GM12878 (cell line): ENCODE measurements at regions of chr10 and their contacts with region 1.

Region 1: GRCh38 chr10:104291439-104291951 is 22.5 kb downstream of the GSTO2 start:
- DNase-seq: peak; percentile 40
- ATAC-seq: peak; percentile 99
- H3K4me3 ChIP-seq: no peak overlapping the region
- H3K27ac ChIP-seq: no peak overlapping the region
- H3K4me1 ChIP-seq: no peaks in the 10 kb centered on the region
- H3K27me3 ChIP-seq: no peaks in the 10 kb centered on the region; a peak in 1 of 4 replicates
- CTCF ChIP-seq: peak; percentile 100; a peak in 5 of 6 replicates
- EP300 ChIP-seq: no peak
- POLR2A ChIP-seq: no peak
- RAD21 ChIP-seq: peak; percentile 81

Region 2: GRCh38 chr10:103983367-103983911 is 308.1 kb before region 1 on chr10:
- CTCF ChIA-PET with region 1: no interaction called
- POLR2A ChIA-PET with region 1: no interaction called
- RAD21 ChIA-PET with region 1: no interaction called
- SMC1A ChIA-PET with region 1: no interaction called
- in situ Hi-C with region 1: no loop called
- intact Hi-C with region 1: no loop called
- DNase-seq: peak; percentile 40
- ATAC-seq: peak; percentile 86
- H3K4me3 ChIP-seq: no peak overlapping the region
- H3K27ac ChIP-seq: peak overlapping the region; percentile 65
- H3K4me1 ChIP-seq: peaks cover 7% of the 10 kb centered on the region; the same call in 1 of the 2 replicates
- H3K27me3 ChIP-seq: no peaks in the 10 kb centered on the region
- CTCF ChIP-seq: no peak
- EP300 ChIP-seq: no peak
- POLR2A ChIP-seq: no peak
- RAD21 ChIP-seq: no peak

Region 3: DNA sequence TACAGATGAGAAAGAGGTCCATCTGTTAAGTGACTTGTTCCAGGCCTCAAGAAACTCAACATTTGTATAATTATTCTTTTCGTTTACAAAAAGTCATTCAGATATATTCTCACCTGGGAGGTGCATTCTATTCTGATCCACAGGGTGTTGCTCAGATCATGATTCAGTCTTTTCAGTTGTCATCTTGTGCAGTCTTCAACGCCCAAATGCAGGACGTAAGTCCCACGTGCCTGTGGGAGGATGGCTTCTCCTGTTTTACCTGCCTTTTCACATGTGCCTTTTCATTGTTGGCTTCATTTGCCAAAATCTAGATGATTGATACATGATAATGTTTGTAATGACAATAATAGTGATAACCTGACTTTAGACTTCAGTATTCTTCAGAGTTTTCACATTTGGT is 278.0 kb before region 1 on chr10:
- CTCF ChIA-PET with region 1: no interaction called
- POLR2A ChIA-PET with region 1: no interaction called
- RAD21 ChIA-PET with region 1: no interaction called
- SMC1A ChIA-PET with region 1: no interaction called
- in situ Hi-C with region 1: no loop called
- intact Hi-C with region 1: no loop called
- DNase-seq: no peak
- ATAC-seq: no peak
- H3K4me3 ChIP-seq: no peak overlapping the region
- H3K27ac ChIP-seq: no peak overlapping the region
- H3K4me1 ChIP-seq: no peaks in the 10 kb centered on the region
- H3K27me3 ChIP-seq: no peaks in the 10 kb centered on the region
- CTCF ChIP-seq: no peak
- EP300 ChIP-seq: no peak
- POLR2A ChIP-seq: no peak
- RAD21 ChIP-seq: no peak

Region 4: DNA sequence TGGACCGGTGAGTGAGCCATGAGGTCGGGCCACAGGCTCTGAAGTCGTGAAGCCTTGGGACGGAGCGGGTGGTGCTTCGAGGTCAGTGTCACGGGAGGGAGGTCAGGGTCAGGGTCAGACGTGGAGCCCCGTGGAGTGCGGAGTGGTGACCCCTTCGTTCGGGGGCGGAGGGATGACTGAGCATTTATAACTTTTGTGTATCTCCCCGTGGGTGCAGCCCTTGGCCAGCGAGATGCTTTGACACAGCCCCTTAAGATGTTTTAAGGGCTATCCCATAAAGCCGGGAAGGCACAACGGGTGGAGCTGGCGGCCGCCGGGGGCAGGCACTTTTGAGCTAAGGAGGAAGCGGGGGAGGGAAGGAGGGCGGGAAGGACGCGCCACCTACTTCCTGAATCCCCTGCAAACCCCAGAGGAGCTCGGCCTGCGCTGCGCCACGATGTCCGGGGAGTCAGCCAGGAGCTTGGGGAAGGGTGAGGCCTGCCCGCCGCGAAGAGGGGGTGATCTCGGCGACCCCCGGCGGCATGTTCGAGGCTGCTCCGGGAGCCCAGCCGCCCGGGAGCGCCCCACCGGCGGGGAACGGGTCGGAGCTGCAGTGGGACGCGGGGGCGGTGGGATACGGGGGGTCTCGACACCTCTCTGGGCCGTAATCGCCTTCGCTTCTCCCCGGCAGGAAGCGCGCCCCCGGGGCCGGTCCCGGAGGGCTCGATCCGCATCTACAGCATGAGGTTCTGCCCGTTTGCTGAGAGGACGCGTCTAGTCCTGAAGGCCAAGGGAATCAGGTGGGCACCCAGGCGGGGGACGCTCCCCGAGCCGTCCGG is 36.8 kb before region 1 on chr10 and contains the start of gene GSTO1:
- CTCF ChIA-PET with region 1: interaction called, 22 read pairs
- POLR2A ChIA-PET with region 1: interaction called, 3 read pairs
- RAD21 ChIA-PET with region 1: no interaction called
- SMC1A ChIA-PET with region 1: no interaction called
- in situ Hi-C with region 1: no loop called
- intact Hi-C with region 1: no loop called
- DNase-seq: peak; percentile 30
- ATAC-seq: peak; percentile 89
- H3K4me3 ChIP-seq: peak within 1 kb of the TSS; percentile 81
- H3K27ac ChIP-seq: peak within 1 kb of the TSS; percentile 89
- H3K4me1 ChIP-seq: peaks cover 8% of the 10 kb centered on the region
- H3K27me3 ChIP-seq: no peaks in the 10 kb centered on the region
- CTCF ChIP-seq: peak in 1 of 3 experiments; percentile 18; a peak in 1 of 6 replicates
- EP300 ChIP-seq: no peak
- POLR2A ChIP-seq: peak; percentile 94
- RAD21 ChIP-seq: no peak
- polyA plus RNA-seq, gene GSTO1: 53.1 to 149 TPM

Region 5: DNA sequence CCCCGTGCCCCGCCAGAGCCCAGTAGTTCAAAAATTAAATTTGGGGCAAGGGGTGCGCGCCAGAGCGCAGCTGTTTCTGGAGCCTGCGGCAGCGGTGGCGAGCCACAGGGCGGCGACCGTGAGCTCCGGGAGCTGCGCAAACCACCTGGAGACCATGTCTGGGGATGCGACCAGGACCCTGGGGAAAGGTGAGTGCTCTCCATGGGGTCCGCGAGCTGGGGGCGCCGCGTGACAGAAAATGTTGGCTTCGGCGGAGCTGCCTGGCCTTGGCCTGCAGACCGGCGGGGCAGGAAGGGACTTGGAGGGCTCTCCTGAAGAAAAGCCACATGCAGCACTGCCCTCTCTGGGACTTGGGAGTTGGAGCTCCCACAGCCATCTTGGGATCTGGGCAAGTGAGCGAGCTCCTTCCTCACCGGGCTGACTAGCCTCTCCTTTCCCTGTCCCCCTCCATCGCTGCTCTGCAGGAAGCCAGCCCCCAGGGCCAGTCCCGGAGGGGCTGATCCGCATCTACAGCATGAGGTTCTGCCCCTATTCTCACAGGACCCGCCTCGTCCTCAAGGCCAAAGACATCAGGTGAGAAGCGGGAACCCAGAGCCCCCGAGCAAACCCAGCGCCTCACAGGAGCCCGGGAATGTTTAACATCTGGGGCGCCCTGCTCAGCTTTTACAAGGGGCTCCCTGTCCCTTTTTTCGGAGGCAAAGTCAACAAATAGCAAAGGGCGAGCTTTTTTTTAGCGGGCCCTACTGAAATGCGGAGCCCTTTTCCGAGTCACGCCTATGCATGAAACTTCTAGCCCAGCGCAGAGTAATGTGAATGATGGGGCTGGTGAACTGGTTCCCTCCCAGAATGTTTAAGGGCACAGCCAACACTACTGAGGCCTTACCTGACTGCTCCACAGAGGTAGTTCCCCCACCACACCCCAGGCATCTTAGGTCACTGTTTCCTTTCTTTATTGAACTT is 16.5 kb before region 1 on chr10:
- CTCF ChIA-PET with region 1: interaction called, 120 read pairs
- POLR2A ChIA-PET with region 1: no interaction called
- RAD21 ChIA-PET with region 1: interaction called, 8 read pairs
- SMC1A ChIA-PET with region 1: interaction called, 12 read pairs
- in situ Hi-C with region 1: no loop called
- intact Hi-C with region 1: no loop called
- DNase-seq: no peak
- ATAC-seq: peak; percentile 97
- H3K4me3 ChIP-seq: no peak overlapping the region
- H3K27ac ChIP-seq: no peak overlapping the region
- H3K4me1 ChIP-seq: no peaks in the 10 kb centered on the region
- H3K27me3 ChIP-seq: peaks cover 2% of the 10 kb centered on the region in 2 experiments; a peak in 3 of 4 replicates
- CTCF ChIP-seq: peak; percentile 69 to 97 (median 86)
- EP300 ChIP-seq: no peak
- POLR2A ChIP-seq: no peak
- RAD21 ChIP-seq: peak; percentile 36; the same call in 1 of the 2 replicates

Region 6: DNA sequence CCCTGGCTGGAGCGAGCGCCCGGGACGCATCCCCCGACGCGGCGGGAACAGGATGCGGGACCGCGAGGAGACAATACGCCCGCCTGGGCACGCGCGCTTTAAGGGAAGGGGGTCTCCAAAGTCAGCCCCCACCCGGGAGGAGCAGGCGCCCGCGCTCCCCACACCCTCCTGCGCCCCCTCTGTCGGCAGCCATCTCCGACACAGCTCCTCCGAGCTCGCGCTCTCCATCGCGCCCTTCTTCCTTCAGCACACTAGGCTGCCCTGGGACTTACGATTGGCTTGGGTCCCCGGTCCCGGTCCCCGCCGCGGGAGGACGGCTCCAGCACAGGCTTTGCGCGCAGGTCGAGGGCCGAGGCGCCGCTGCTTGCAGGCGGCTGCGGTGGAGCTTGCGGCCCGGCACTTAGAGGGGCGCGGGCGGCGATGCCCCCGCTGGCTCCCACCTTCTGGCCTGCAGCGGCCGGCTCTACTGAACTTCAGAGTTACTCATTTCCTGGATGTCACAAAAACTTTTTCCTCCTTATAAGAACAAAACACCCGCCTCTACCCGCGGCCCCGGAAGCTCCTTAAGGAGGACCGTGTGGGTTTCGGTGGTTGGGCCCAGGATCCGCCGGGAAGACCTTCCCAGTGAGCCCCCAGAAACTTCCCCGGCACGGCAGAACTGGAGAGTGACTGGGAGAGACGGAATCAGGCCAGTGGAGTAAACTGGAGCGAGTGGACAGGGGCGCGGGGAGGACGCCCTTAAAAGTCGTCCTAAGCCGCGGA is 46.7 kb after region 1 on chr10 and contains the start of gene ITPRIP:
- CTCF ChIA-PET with region 1: interaction called, 19 read pairs
- POLR2A ChIA-PET with region 1: no interaction called
- RAD21 ChIA-PET with region 1: interaction called, 5 read pairs
- SMC1A ChIA-PET with region 1: interaction called, 7 read pairs
- in situ Hi-C with region 1: loop called (anchors 10 kb)
- intact Hi-C with region 1: no loop called
- DNase-seq: no peak
- ATAC-seq: peak; percentile 79
- H3K4me3 ChIP-seq: peak within 1 kb of the TSS; percentile 94
- H3K27ac ChIP-seq: peak within 1 kb of the TSS; percentile 96
- H3K4me1 ChIP-seq: peaks cover 20% of the 10 kb centered on the region
- H3K27me3 ChIP-seq: no peaks in the 10 kb centered on the region
- CTCF ChIP-seq: peak; percentile 15 to 26 (median 18); a peak in 4 of 6 replicates
- EP300 ChIP-seq: 0 out of 4 replicates have a peak, but pooled peaks of 1 of the 2 experiments have one; percentile 14
- POLR2A ChIP-seq: peak; percentile 91
- RAD21 ChIP-seq: no peak
- polyA plus RNA-seq, gene ITPRIP: 0.82 to 1.2 TPM

Region 7: GRCh38 chr10:104485632-104486031 is 194.1 kb after region 1 on chr10:
- CTCF ChIA-PET with region 1: no interaction called
- POLR2A ChIA-PET with region 1: no interaction called
- RAD21 ChIA-PET with region 1: no interaction called
- SMC1A ChIA-PET with region 1: no interaction called
- in situ Hi-C with region 1: no loop called
- intact Hi-C with region 1: loop called (anchors 10 kb)
- DNase-seq: no peak
- ATAC-seq: peak; percentile 32; the same call in 1 of the 3 replicates
- H3K4me3 ChIP-seq: no peak overlapping the region
- H3K27ac ChIP-seq: no peak overlapping the region
- H3K4me1 ChIP-seq: no peaks in the 10 kb centered on the region
- H3K27me3 ChIP-seq: no peaks in the 10 kb centered on the region; a peak in 1 of 4 replicates
- CTCF ChIP-seq: peak in 2 of 3 experiments; percentile 15 to 29; a peak in 2 of 6 replicates
- EP300 ChIP-seq: no peak
- POLR2A ChIP-seq: no peak
- RAD21 ChIP-seq: no peak